Activated CD8-positive, alpha-beta T cell treated with anti-CD3 and anti-CD28 coated beads, Interleukin-2, amount 10 ng/mL, durations not matched to agents 7 days and 5 days (primary cell): ENCODE measurements at regions of chr11 and their contacts with region 1.

Region 1: DNA sequence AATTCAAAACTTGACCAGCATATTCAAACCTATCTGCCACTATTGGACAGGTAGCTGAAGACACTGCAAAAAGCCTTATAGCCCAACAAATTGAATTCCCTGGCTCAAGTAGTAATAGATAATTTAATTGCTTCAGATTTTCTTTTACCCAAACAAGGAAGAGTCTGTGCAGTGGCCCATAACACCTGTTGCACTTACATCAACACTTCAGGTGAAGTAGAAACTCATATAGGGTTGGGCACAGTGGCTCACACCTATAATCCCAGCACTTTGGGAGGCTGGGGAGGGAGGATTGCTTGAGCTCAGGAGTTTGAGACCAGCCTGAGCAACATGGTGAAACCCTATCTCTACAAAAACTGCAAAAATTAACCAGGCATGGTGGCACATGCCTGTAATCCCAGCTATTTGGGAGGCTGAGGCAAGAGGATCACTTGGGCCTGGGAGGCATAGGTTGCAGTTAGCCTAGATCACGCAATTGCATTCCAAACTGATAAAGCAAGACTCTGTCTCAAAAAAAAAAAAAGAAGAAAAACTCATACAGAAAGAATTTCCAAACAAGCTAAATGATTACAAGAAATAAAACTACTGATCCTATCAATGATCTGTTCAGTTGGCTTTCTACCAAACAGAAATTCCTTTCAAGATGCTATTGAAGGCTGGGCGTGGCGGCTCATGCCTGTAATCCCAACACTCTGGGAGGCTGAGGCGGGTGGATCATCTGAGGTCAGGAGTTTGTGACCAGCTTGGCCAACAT is 9.5 kb downstream of the FOLR3 start:
- DNase-seq: no peak
- ATAC-seq: no peak
- H3K4me3 Mint-ChIP-seq: no peak overlapping the region
- H3K27ac Mint-ChIP-seq: no peak overlapping the region
- H3K4me1 Mint-ChIP-seq: peaks cover 24% of the 10 kb centered on the region
- H3K27me3 Mint-ChIP-seq: peaks cover 8% of the 10 kb centered on the region

Region 2: DNA sequence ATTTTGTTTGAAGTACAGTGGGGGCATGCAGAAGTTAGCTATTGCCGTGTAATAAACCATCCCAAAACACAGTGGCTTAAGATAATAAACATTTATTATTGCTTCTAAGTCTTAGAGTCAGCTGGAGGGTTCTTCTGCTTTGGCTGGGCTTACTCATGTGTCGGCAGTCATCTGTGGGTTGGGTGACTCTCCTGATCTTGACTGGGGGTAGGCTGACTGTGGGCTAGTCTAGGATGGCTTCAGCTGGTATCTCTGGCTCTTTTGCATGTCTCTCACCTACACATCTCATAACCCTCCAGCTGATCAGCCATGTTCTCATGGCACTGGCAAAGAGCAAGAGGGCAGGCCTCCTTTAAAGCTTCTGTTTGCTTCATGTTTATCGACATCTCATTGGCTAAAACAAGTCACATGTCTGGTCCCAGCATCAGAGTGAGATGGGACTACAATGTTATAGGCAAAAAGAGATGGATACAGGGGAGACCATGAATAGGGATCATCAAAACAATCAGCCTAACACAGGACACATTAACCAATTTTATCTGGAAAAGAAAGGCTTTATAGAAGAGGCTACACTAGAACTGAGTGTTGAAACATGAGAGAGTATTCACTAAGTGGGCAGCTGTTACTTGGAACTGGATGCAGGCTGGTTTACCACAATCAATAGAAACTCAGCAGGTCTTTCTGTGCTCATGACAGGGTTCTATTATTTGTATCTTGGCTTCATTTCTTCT is 59.2 kb before region 1 on chr11:
- CTCF ChIA-PET with region 1: interaction called, 17 read pairs
- POLR2A ChIA-PET with region 1: no interaction called
- DNase-seq: no peak
- ATAC-seq: no peak
- H3K4me3 Mint-ChIP-seq: no peak overlapping the region
- H3K27ac Mint-ChIP-seq: peak overlapping the region; percentile 1
- H3K4me1 Mint-ChIP-seq: peaks cover 24% of the 10 kb centered on the region
- H3K27me3 Mint-ChIP-seq: no peaks in the 10 kb centered on the region

Region 3: GRCh38 chr11:72102946-72103753 is 41.8 kb before region 1 on chr11 and contains the start of gene LAMTOR1:
- CTCF ChIA-PET with region 1: interaction called, 19 read pairs
- POLR2A ChIA-PET with region 1: interaction called, 3 read pairs
- DNase-seq: peak; percentile 99
- ATAC-seq: peak; percentile 95
- H3K4me3 Mint-ChIP-seq: peak within 1 kb of the TSS; percentile 96
- H3K27ac Mint-ChIP-seq: peak within 1 kb of the TSS; percentile 87
- H3K4me1 Mint-ChIP-seq: peaks cover 38% of the 10 kb centered on the region
- H3K27me3 Mint-ChIP-seq: no peaks in the 10 kb centered on the region
- total RNA-seq, gene LAMTOR1: 72.7 to 77.0 TPM

Region 4: DNA sequence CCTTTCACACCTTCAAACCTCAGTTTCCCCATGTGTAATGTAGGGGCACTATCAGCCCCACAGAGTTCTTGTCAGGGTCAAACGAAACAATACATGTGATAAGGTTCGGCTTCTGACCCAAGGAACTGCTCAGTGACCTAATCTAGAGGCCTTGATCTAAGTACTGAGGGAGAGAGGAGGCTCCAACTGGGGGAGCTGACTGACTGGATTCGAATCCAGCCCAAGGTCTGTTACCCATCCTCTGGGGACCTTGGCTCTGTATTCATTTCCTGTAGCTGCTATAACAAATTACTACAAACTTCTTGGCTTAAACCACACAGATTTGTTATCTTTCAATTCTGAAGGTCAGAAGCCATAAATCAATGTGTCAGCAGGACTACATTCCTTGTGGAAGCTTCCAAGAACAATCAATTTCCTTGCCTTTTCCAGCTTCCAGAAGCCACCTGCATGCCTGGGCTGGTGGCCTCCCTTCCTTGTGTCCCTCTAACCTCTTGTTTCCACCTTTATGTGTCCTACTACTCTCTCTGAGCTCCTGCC is 21.8 kb before region 1 on chr11:
- CTCF ChIA-PET with region 1: interaction called, 22 read pairs
- POLR2A ChIA-PET with region 1: no interaction called
- DNase-seq: no peak
- ATAC-seq: no peak
- H3K4me3 Mint-ChIP-seq: no peak overlapping the region
- H3K27ac Mint-ChIP-seq: no peak overlapping the region
- H3K4me1 Mint-ChIP-seq: peaks cover 6% of the 10 kb centered on the region
- H3K27me3 Mint-ChIP-seq: peaks cover 4% of the 10 kb centered on the region

Region 5: DNA sequence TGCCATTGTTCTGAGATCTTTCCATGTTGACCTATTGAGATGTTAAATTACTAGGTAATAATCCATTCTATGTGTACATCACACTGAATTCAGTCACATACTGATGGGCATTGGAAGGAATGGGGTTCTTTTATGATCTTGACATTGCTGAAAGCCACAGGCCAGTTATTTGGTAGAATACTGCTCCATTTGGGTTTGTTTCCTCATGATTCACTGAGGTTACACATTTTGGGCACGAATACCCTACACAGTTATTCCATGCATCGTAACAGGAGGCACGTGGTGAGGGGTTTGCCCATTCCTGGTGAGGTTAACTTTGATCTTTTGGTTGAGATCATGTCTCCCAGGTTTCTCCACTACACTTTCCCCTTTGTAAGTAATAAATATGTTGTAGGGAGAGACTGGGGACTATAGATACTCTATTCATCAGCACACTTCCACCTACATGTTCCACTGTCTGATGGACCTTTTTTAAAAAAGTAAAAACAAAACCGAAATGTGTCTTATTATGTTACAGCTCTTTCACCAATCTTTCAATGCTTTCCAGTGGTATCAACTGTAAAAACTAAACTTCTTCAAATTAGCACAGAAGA is 34.9 kb after region 1 on chr11:
- CTCF ChIA-PET with region 1: interaction called, 14 read pairs
- POLR2A ChIA-PET with region 1: no interaction called
- DNase-seq: no peak
- ATAC-seq: no peak
- H3K4me3 Mint-ChIP-seq: no peak overlapping the region
- H3K27ac Mint-ChIP-seq: no peak overlapping the region
- H3K4me1 Mint-ChIP-seq: peaks cover 2% of the 10 kb centered on the region
- H3K27me3 Mint-ChIP-seq: peaks cover 20% of the 10 kb centered on the region

Region 6: DNA sequence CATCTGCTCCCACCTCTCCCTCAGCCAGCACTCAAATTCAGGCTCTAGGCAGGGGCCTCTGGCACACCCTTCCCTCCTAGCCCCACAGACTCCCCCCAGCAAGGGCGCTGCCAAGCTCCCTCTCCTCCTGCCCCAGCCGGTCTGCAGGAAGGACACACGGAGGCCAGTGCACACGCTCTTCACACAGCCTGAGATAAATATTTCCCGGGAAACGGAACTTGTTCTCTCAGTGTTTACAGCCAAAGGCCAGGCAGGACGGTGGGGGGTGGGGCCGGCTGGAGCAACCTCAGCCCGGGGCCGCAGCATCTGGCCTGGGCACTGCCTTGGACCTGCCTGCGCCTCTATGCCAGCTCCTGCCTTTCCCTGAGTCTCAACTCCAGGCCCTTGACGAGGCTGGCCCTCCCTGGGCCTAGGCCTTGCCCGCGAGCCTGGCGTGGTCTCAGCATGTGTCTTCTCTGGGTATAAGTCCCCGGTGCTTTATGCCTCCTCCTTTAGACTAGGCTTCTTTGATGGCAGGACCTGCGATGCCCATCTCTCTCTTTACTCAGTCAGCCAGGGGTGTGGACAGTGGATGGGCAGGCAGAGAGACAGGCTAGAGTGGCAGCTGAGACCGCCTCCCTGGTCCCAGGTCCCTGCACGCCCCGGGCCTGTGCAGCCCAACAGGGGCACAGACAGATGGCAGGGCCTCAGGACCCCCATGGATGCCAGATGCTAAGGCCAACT is 480.9 kb after region 1 on chr11:
- CTCF ChIA-PET with region 1: no interaction called
- POLR2A ChIA-PET with region 1: no interaction called
- DNase-seq: no peak
- ATAC-seq: no peak
- H3K4me3 Mint-ChIP-seq: no peak overlapping the region
- H3K27ac Mint-ChIP-seq: no peak overlapping the region
- H3K4me1 Mint-ChIP-seq: peaks cover 38% of the 10 kb centered on the region
- H3K27me3 Mint-ChIP-seq: peaks cover 14% of the 10 kb centered on the region